ENCODE measurements at regions of chr1 and their contacts with region 1.

Region 1: GRCh38 chr1:57424231-57425027 is 569 bp upstream of the DAB1 start:
- DNase-seq: peak; percentile 9
- ATAC-seq: peak; percentile 81
- H3K4me3 ChIP-seq: peak overlapping the region; percentile 34 to 62 (median 45)
- H3K27ac ChIP-seq: no peak overlapping the region
- H3K4me1 ChIP-seq: peaks cover 18% of the 10 kb centered on the region
- H3K27me3 ChIP-seq: peaks cover 9 to 51% of the 10 kb centered on the region in 2 experiments
- CTCF ChIP-seq: peak; percentile 82
- EP300 ChIP-seq: no peak
- POLR2A ChIP-seq: no peak
- RAD21 ChIP-seq: peak; percentile 67

Region 2: GRCh38 chr1:57376041-57376440 is 48.4 kb before region 1 on chr1:
- CTCF ChIA-PET with region 1: no interaction called
- POLR2A ChIA-PET with region 1: no interaction called
- in situ Hi-C with region 1: no loop called
- intact Hi-C with region 1: no loop called
- DNase-seq: no peak
- ATAC-seq: no peak
- H3K4me3 ChIP-seq: no peak overlapping the region
- H3K27ac ChIP-seq: no peak overlapping the region
- H3K4me1 ChIP-seq: no peaks in the 10 kb centered on the region
- H3K27me3 ChIP-seq: no peaks in the 10 kb centered on the region
- CTCF ChIP-seq: no peak
- EP300 ChIP-seq: no peak
- POLR2A ChIP-seq: no peak
- RAD21 ChIP-seq: no peak

Region 3: GRCh38 chr1:57464756-57465155 is 40.3 kb after region 1 on chr1:
- CTCF ChIA-PET with region 1: no interaction called
- POLR2A ChIA-PET with region 1: interaction called, 3 read pairs
- in situ Hi-C with region 1: no loop called
- intact Hi-C with region 1: loop called (anchors 2 kb)
- DNase-seq: peak; percentile 90
- ATAC-seq: peak; percentile 93
- H3K4me3 ChIP-seq: peak overlapping the region in 1 of 3 experiments; percentile 5; a peak in 1 of 6 replicates
- H3K27ac ChIP-seq: peak overlapping the region; percentile 44
- H3K4me1 ChIP-seq: peaks cover 42% of the 10 kb centered on the region
- H3K27me3 ChIP-seq: peaks cover 0 to 16% of the 10 kb centered on the region in 2 experiments; a peak in 1 of 5 replicates
- CTCF ChIP-seq: no peak
- EP300 ChIP-seq: peak in 1 of 2 experiments; percentile 93; a peak in 2 of 4 replicates
- POLR2A ChIP-seq: no peak
- RAD21 ChIP-seq: no peak

Region 4: GRCh38 chr1:57489358-57490036 is 65.1 kb after region 1 on chr1:
- CTCF ChIA-PET with region 1: no interaction called
- POLR2A ChIA-PET with region 1: no interaction called
- in situ Hi-C with region 1: no loop called
- intact Hi-C with region 1: loop called (anchors 10 kb)
- DNase-seq: no peak
- ATAC-seq: no peak
- H3K4me3 ChIP-seq: no peak overlapping the region
- H3K27ac ChIP-seq: no peak overlapping the region
- H3K4me1 ChIP-seq: no peaks in the 10 kb centered on the region
- H3K27me3 ChIP-seq: peaks cover 3 to 6% of the 10 kb centered on the region in 2 experiments; a peak in 3 of 5 replicates
- CTCF ChIP-seq: no peak
- EP300 ChIP-seq: no peak
- POLR2A ChIP-seq: no peak
- RAD21 ChIP-seq: no peak

Region 5: DNA sequence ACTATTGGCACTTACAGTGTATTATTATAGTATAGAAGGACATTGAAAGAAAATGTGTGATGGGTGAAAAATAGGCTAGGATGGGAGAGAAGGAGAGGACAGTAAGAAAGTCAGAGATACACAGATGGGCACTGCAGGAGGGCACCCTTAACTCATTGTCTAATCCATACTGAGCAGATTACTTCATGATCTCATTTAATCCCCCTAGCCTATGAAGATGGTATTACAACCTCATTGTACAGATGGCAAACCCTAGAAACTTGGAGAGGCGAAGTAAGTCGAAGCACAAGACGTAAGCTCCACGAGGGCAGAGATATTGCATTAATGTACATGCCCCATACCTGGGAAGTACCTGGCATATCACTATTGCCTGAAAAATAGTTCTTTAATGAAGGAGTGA is 346.3 kb after region 1 on chr1:
- CTCF ChIA-PET with region 1: no interaction called
- POLR2A ChIA-PET with region 1: no interaction called
- in situ Hi-C with region 1: no loop called
- intact Hi-C with region 1: loop called (anchors 5 kb)
- DNase-seq: peak; percentile 3
- ATAC-seq: peak; percentile 60; the same call in 2 of the 3 replicates
- H3K4me3 ChIP-seq: no peak overlapping the region
- H3K27ac ChIP-seq: no peak overlapping the region
- H3K4me1 ChIP-seq: no peaks in the 10 kb centered on the region
- H3K27me3 ChIP-seq: no peaks in the 10 kb centered on the region; a peak in 1 of 5 replicates
- CTCF ChIP-seq: no peak
- EP300 ChIP-seq: no peak
- POLR2A ChIP-seq: no peak
- RAD21 ChIP-seq: no peak

Region 6: GRCh38 chr1:58047265-58047858 is 622.9 kb after region 1 on chr1:
- CTCF ChIA-PET with region 1: interaction called, 4 read pairs
- POLR2A ChIA-PET with region 1: no interaction called
- in situ Hi-C with region 1: loop called (anchors 10 kb)
- intact Hi-C with region 1: no loop called
- DNase-seq: peak; percentile 6
- ATAC-seq: peak; percentile 83
- H3K4me3 ChIP-seq: no peak overlapping the region
- H3K27ac ChIP-seq: no peak overlapping the region
- H3K4me1 ChIP-seq: no peaks in the 10 kb centered on the region
- H3K27me3 ChIP-seq: no peaks in the 10 kb centered on the region
- CTCF ChIP-seq: peak; percentile 71
- EP300 ChIP-seq: no peak
- POLR2A ChIP-seq: no peak
- RAD21 ChIP-seq: peak; percentile 34; the same call in 1 of the 2 replicates

Measured in HepG2 (cell line).